ENCODE measurements at regions of chr11 and their contacts with region 1.

Region 1: DNA sequence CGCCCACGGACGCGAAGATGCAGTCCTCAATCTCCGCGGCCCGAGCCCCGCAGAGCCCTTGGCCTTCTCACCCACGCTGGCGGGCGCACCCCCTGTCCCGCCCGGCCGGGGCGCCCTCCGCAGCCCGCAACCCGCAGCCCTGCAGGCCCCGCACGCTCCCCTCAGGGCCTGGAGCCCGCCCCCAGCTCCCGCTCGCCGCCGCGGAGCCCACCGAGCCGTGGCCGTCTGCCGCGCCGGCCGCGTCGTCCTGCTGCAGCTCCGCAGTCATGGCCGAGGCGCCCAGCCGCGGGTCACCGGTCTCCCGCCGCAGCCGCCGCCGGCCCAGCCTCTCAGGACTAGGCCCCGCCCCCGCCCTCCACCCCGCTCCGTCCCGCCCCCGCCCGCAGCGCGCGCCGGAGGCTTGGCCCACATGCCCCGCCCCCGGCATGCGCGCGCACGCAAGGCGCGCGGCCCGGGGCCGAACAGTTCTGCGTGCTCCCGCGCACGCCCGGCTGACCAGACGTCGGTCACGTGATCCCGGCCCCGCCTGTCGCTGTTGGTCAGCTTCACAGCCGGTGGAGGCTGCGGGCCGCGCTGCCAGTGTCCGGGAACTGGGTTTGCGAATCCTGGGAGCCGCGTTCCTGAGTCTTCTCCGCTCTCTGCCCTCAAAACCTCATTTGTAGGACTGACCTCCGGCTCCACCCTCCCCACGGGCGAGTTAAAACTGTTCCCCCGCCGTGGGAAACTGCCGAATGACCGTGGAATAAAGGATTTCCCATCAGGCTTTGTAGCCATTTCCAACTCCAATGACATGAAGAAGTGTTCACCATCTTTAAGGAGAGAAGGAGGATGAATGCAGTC is at the start of gene USP28:
- DNase-seq: peak; percentile 83 to 90
- ATAC-seq: peak; percentile 86 to 97 (median 88)
- H3K4me3 ChIP-seq: peak within 1 kb of the TSS; percentile 95
- H3K4me3 Mint-ChIP-seq: peak within 1 kb of the TSS; percentile 93
- H3K27ac ChIP-seq: peak within 1 kb of the TSS; percentile 92
- H3K27ac Mint-ChIP-seq: peak within 1 kb of the TSS; percentile 93
- H3K4me1 ChIP-seq: peaks cover 36% of the 10 kb centered on the region
- H3K4me1 Mint-ChIP-seq: peaks cover 52 to 55% of the 10 kb centered on the region in 2 donors
- H3K27me3 ChIP-seq: no peaks in the 10 kb centered on the region
- H3K27me3 Mint-ChIP-seq: no peaks in the 10 kb centered on the region
- CTCF ChIP-seq: no peak
- total RNA-seq, gene USP28: 118 to 160 (median 132) TPM

Region 2: DNA sequence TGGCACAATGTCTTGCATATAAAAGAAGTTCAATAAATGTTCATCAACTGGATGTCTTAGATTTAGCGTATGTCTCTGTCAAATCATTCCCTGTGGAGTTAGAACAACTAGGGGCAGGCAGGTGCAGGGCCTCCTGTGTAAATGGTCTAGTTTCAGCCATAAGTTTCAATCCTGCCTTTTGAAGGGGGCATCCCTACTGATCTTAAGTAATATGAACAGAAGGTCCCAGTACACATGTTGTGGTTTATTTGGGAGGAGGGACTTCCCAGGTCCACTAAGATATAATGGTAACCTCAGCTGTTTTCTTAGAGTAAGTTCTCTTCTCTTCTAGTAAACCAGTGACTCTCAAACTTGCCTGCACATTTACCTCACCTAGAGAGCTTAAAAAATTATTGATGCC is 541.3 kb before region 1 on chr11:
- intact Hi-C with region 1: no loop called
- DNase-seq: no peak
- ATAC-seq: no peak
- H3K4me3 ChIP-seq: no peak overlapping the region
- H3K4me3 Mint-ChIP-seq: no peak overlapping the region
- H3K27ac ChIP-seq: no peak overlapping the region
- H3K27ac Mint-ChIP-seq: no peak overlapping the region
- H3K4me1 ChIP-seq: no peaks in the 10 kb centered on the region
- H3K4me1 Mint-ChIP-seq: no peaks in the 10 kb centered on the region
- H3K27me3 ChIP-seq: no peaks in the 10 kb centered on the region
- H3K27me3 Mint-ChIP-seq: no peaks in the 10 kb centered on the region
- CTCF ChIP-seq: no peak

Region 3: DNA sequence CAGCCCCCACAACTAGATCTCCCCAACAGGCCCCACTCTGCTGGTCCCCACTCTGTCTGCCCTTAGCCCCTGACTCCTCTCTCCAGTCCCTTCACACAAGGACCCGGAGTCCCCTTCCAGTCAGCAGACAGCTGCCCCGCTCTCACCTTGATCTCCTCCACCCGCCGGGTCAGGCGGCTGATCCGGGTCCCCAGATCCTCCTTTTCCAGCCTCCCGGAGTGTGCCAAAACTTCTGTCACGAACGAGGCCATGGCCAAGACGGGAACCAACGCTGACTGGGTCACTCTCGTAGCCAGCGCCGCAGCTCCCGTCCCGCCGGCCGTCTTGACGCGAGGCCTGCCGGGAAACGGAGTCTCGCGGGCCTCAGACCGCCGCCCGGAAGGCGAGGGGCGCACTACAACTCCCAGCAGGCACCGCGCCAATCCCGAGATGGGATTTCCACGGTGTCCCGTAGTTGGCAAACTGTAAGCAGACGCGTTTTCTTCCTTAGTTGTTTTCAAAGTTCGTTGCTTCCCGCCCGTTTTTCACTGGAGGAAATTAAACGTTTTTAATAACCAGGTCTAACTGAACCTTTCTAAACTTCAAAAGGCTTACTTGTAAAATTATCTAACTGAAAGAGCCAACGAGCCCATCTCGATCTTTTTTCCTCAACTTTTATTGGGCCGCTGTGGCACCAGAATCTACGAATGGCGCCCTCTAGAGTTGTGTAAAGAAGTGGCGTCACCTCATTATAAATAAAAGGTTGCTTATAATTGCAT is 101.9 kb before region 1 on chr11 and contains the start of gene ZW10:
- intact Hi-C with region 1: loop called (anchors 10 kb)
- DNase-seq: peak; percentile 89 to 96
- ATAC-seq: peak; percentile 98 to 99 (median 99)
- H3K4me3 ChIP-seq: peak within 1 kb of the TSS; percentile 85
- H3K4me3 Mint-ChIP-seq: peak within 1 kb of the TSS; percentile 99
- H3K27ac ChIP-seq: peak within 1 kb of the TSS; percentile 42
- H3K27ac Mint-ChIP-seq: peak within 1 kb of the TSS; percentile 92 to 99
- H3K4me1 ChIP-seq: peaks cover 9% of the 10 kb centered on the region
- H3K4me1 Mint-ChIP-seq: peaks cover 12 to 18% of the 10 kb centered on the region in 2 donors
- H3K27me3 ChIP-seq: no peaks in the 10 kb centered on the region
- H3K27me3 Mint-ChIP-seq: peaks cover 8% of the 10 kb centered on the region in 2 donors
- CTCF ChIP-seq: peak; percentile 97
- total RNA-seq, gene ZW10: 5.8 to 9.6 (median 6.6) TPM

Region 4: DNA sequence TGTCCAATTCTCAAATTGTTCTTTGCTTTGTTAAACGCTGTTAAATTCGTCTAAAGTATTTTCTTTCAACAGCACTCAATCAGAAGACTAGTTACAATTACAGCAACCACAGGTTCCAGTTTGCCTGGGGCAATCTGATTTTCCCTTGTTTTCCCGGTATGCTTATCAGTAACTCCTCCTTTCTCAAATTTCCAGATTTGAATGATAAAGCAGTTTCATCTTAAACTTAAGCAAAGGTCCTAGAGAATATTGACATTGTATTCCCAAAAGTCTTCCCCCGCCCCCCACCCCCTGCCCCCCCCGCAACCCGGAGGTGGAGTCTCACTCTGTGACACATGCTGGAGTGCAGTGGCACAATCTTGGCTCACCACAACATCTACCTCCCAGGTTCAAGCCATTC is 10.5 kb after region 1 on chr11:
- intact Hi-C with region 1: no loop called
- DNase-seq: no peak
- ATAC-seq: no peak
- H3K4me3 ChIP-seq: no peak overlapping the region
- H3K4me3 Mint-ChIP-seq: no peak overlapping the region
- H3K27ac ChIP-seq: no peak overlapping the region
- H3K27ac Mint-ChIP-seq: no peak overlapping the region
- H3K4me1 ChIP-seq: no peaks in the 10 kb centered on the region
- H3K4me1 Mint-ChIP-seq: no peaks in the 10 kb centered on the region
- H3K27me3 ChIP-seq: no peaks in the 10 kb centered on the region
- H3K27me3 Mint-ChIP-seq: no peaks in the 10 kb centered on the region
- CTCF ChIP-seq: no peak

Region 5: DNA sequence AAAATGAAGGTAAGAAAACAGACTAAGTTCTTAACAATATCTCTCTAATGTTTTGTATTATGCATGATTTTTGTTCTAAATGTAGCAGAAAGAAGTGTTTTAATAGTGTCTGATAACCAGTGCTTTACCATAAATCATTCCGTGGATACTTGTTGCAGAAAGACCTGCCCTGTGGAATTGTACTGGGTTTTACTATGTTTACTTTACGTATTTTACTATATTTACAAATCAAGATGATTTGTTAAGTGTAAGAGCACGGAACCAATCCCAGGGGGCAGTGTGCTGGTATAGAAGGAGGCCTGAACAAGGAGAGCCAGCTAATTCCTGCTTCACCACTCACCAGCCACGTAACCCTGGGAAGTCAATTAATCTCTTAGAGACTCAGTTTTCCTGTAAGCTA is 30.6 kb after region 1 on chr11:
- intact Hi-C with region 1: no loop called
- DNase-seq: no peak
- ATAC-seq: no peak
- H3K4me3 ChIP-seq: no peak overlapping the region
- H3K4me3 Mint-ChIP-seq: no peak overlapping the region
- H3K27ac ChIP-seq: no peak overlapping the region
- H3K27ac Mint-ChIP-seq: no peak overlapping the region
- H3K4me1 ChIP-seq: no peaks in the 10 kb centered on the region
- H3K4me1 Mint-ChIP-seq: no peaks in the 10 kb centered on the region
- H3K27me3 ChIP-seq: no peaks in the 10 kb centered on the region
- H3K27me3 Mint-ChIP-seq: peaks cover 21 to 45% of the 10 kb centered on the region in 2 donors
- CTCF ChIP-seq: no peak

Region 6: GRCh38 chr11:113934761-113935160 is 59.3 kb after region 1 on chr11:
- intact Hi-C with region 1: no loop called
- DNase-seq: no peak
- ATAC-seq: no peak
- H3K4me3 ChIP-seq: no peak overlapping the region
- H3K4me3 Mint-ChIP-seq: no peak overlapping the region
- H3K27ac ChIP-seq: no peak overlapping the region
- H3K27ac Mint-ChIP-seq: no peak overlapping the region
- H3K4me1 ChIP-seq: no peaks in the 10 kb centered on the region
- H3K4me1 Mint-ChIP-seq: no peaks in the 10 kb centered on the region
- H3K27me3 ChIP-seq: no peaks in the 10 kb centered on the region
- H3K27me3 Mint-ChIP-seq: peaks cover 21 to 24% of the 10 kb centered on the region in 2 donors
- CTCF ChIP-seq: no peak

Region 7: DNA sequence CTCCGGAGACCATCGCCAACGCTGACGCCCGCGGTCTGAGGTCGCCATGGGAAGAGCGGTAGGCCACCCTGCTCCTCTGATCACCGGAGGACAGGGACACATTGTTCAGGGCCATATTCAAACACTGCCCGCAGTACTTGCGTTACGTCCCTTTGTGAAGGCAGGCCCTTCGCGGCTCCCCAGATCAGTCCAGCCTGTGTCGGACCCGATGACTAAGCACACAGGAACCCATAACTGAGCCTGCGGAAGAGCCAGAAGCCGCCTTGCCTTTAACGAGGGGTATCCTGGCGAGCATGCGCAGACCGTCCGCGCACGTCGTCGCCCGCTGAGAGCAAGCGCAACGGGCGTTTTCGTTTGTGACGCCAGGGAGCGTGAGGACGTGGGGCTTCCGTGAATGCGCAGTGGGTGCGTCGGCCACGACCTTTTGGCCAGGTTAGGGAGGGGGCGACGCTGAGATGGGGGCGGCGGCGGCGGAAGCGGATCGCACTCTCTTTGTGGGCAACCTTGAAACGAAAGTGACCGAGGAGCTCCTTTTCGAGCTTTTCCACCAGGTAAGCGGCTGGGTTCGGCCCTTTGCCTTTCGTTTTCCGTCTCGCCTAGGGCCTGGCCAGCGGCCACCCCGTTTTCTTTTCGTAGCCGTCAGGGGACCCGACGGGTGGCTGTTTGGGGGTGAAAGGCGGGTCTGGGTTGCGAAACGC is 524.9 kb after region 1 on chr11 and contains the starts of genes C11orf71 and RBM7:
- intact Hi-C with region 1: loop called (anchors 10 kb)
- DNase-seq: peak; percentile 97 to 100
- ATAC-seq: peak; percentile 90 to 97 (median 93)
- H3K4me3 ChIP-seq: peak within 1 kb of the TSS; percentile 81
- H3K4me3 Mint-ChIP-seq: peak within 1 kb of the TSS; percentile 96
- H3K27ac ChIP-seq: peak within 1 kb of the TSS; percentile 95
- H3K27ac Mint-ChIP-seq: peak within 1 kb of the TSS; percentile 98 to 99
- H3K4me1 ChIP-seq: peaks cover 7% of the 10 kb centered on the region
- H3K4me1 Mint-ChIP-seq: peaks cover 45 to 48% of the 10 kb centered on the region in 2 donors
- H3K27me3 ChIP-seq: no peaks in the 10 kb centered on the region
- H3K27me3 Mint-ChIP-seq: no peaks in the 10 kb centered on the region
- CTCF ChIP-seq: no peak
- total RNA-seq, gene C11orf71: 11.3 to 13.1 (median 11.5) TPM
- total RNA-seq, gene RBM7: 50.4 to 79.7 (median 58.5) TPM

Measured in natural killer cell (primary cell).